Motor neuron (in vitro differentiated cells): ENCODE measurements at regions of chr10 and their contacts with region 1.

Region 1: GRCh38 chr10:55091691-55092328 is 290.8 kb upstream of the PCDH15 start:
- ATAC-seq: no peak
- H3K4me3 ChIP-seq: no peak overlapping the region
- H3K27ac ChIP-seq: no peak overlapping the region
- H3K4me1 ChIP-seq: no peaks in the 10 kb centered on the region

Region 2: GRCh38 chr10:55263327-55263726 is 171.5 kb after region 1 on chr10:
- in situ Hi-C with region 1: loop called in 1 of 9 experiments (anchors 25 kb)
- ATAC-seq: no peak
- H3K4me3 ChIP-seq: no peak overlapping the region
- H3K27ac ChIP-seq: no peak overlapping the region
- H3K4me1 ChIP-seq: no peaks in the 10 kb centered on the region